Activated T-helper 1 cell treated with anti-CD3 and anti-CD28 coated beads, Interleukin-12 subunit alpha, Interleukin-12 subunit beta, Interleukin-2, Interleukin-4 antibody, amounts not matched to agents 30 ng/mL and 10 ng/mL and 1 ng/mL, durations not matched to agents 14 hours and 24 hours and 36 hours (primary cell): ENCODE measurements at regions of chr2 and their contacts with region 1.

Region 1: DNA sequence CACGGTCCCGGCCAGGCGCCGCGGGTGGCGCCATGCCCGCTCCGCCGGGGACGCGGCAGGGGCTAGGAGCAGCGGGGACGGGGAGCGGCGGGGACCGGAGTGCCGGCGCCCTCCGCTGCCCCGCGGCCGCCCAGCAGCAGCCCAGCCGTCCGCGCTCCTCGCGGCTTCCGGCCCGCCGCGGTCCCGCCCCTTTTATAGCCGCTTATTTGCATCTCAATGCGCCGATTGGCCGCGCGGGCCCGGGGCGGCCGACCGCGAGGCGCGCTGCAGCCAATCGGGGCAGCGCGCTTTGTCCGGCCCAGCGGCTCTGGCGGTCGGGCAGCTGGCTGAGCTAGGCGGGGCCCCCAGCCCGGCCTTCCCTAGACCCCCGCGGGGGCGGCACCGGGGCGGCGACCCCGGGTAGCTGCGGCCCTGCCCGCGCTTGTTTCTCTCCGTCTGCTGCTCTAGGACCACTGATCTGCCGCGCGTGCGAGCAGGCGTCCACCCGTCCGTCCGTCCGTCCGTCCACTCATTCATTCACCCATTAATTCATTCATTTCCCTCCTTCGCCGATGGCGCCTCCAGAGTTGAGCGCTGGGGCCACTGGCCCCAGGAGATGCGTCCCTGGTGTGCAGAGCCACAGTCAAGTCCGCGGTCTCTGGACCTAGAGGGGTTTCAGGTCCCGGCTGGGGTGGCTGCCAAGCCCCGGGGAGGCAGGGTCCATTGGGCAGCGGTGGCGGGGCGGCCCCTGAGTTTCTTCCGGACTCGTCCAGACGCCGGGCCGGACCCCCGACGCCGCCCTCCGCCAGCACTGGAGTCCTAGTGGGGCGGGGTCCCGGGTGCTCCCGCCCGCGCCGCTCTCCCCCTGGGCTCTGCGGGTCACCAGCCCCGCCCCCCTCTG is at the start of gene HES6:
- DNase-seq: peak; percentile 79
- H3K4me3 Mint-ChIP-seq: peak within 1 kb of the TSS; percentile 88
- H3K27ac Mint-ChIP-seq: no peak within 1 kb of the TSS
- H3K4me1 Mint-ChIP-seq: no peaks in the 10 kb centered on the region
- H3K27me3 Mint-ChIP-seq: peaks cover 37% of the 10 kb centered on the region
- total RNA-seq, gene HES6: 10.3 and 11.2 TPM in 2 replicates

Region 2: DNA sequence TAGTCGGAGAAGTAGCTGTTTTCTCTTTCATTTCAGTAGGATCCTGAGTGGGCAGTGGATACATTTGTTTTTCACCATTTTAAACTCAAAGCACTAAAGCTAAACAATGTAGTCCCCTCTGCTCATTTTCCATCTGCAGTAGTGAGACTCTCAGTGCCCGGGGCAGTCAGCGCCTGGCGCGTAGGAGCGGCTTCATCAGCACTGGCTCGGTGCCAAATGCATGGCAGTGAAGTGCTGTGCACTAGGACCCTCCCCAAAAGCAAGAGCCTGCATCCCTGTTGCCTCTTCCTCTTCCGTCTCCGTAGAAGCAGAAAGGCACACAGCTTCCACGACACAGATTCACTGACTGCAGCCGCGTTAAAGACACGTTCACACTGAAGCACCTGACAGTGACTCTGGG is 159.0 kb before region 1 on chr2:
- intact Hi-C with region 1: no loop called
- DNase-seq: no peak
- H3K4me3 Mint-ChIP-seq: no peak overlapping the region
- H3K27ac Mint-ChIP-seq: no peak overlapping the region
- H3K4me1 Mint-ChIP-seq: no peaks in the 10 kb centered on the region
- H3K27me3 Mint-ChIP-seq: no peaks in the 10 kb centered on the region

Region 3: DNA sequence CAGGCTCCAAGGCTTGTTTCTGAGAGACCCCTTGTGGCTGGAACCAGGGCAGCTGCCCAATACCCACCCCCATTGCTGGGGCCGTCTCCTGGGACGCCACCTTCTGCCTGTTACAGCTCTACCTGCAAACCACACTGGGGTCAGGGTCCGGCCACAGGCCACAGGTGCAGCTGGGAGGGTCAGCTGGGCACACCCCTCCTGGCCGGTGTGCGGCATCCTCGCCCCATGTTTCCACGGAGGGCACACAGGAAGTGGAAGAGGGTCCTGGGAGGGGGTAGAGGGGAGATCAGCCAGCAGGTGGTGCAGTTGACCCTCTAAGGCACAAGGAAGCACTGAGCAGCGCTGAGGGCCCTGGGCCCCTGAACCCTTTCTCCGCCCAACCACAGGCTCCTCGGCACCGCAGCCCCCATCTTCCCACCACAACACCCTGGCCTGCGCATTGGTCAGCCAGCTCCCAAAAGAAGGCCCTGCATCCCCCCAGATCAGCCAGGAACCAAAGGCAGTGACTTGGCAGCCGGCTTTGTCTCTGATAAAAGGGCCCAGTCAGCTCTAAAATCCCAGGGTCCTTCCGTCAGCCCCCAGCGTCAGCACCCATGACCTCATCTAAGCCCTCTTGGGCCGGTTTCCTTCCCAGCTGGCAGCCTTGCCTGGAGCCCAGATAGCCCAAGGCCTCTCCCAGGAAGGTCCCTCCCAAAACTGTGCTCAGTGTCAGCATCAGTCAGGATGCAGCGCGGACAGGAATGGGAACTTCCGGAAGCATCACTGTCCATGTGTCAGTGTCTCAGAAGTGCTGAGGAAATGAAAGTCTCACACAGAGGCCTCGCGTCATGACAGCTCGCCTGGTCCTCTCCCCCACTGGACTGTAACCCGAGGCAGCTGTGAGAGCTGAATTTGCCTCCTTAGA is 79.7 kb before region 1 on chr2:
- intact Hi-C with region 1: no loop called
- DNase-seq: no peak
- H3K4me3 Mint-ChIP-seq: peak overlapping the region; percentile 11
- H3K27ac Mint-ChIP-seq: no peak overlapping the region
- H3K4me1 Mint-ChIP-seq: peaks cover 7% of the 10 kb centered on the region
- H3K27me3 Mint-ChIP-seq: peaks cover 25% of the 10 kb centered on the region

Region 4: GRCh38 chr2:238220892-238221521 is 19.1 kb before region 1 on chr2:
- intact Hi-C with region 1: no loop called
- DNase-seq: no peak
- H3K4me3 Mint-ChIP-seq: peak overlapping the region; percentile 7
- H3K27ac Mint-ChIP-seq: no peak overlapping the region
- H3K4me1 Mint-ChIP-seq: no peaks in the 10 kb centered on the region
- H3K27me3 Mint-ChIP-seq: peaks cover 3% of the 10 kb centered on the region

Region 5: DNA sequence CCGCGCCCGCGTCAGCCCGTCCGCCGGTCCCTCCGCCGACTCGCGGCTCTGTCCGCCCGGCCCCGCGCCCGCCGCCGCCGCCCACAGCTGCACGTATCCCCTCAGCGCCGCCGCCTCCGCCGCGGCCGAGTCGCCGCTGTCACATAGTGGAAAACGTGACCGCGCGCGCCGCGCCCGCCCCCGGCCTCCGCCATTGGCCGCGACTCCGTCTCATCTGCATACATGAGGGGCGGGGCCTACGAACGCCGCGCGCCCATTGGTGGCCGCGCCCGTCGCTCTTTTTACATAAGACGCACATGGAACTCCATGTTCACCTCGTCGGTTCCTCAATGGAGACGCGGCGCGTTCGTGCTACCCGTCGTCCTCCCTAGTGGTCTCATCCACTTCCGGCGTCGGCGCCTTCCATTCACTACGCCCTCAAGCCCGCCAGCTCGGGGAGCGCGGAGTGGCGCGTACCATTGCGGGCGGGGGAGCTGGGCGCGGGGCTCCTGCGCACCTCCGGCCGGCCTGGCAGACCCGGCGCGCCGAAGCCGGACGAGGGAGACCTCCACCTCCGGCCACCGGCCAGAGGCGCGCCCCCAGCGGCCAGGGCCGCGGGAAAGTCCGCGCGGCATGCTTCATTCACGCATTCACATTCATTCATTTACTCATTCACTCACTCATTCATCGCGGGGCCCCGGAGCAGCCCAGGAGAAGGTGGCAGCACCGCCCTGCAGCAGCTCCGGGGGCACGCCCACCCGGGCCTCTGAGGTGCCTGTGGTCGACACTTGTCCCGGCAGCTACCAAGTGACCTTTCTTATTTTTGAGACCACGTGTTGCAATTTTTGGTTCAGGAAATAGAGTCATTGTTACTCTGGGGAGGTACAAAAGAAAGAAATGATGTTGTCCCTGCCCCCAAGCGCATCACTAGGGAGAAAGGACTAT is 48.8 kb after region 1 on chr2:
- intact Hi-C with region 1: loop called (anchors 1 kb)
- DNase-seq: peak; percentile 97
- H3K4me3 Mint-ChIP-seq: peak overlapping the region; percentile 91
- H3K27ac Mint-ChIP-seq: peak overlapping the region; percentile 97
- H3K4me1 Mint-ChIP-seq: peaks cover 38% of the 10 kb centered on the region
- H3K27me3 Mint-ChIP-seq: peaks cover 4% of the 10 kb centered on the region